PC-9 (cell line): ENCODE measurements at regions of chr15 and their contacts with region 1.

Region 1: DNA sequence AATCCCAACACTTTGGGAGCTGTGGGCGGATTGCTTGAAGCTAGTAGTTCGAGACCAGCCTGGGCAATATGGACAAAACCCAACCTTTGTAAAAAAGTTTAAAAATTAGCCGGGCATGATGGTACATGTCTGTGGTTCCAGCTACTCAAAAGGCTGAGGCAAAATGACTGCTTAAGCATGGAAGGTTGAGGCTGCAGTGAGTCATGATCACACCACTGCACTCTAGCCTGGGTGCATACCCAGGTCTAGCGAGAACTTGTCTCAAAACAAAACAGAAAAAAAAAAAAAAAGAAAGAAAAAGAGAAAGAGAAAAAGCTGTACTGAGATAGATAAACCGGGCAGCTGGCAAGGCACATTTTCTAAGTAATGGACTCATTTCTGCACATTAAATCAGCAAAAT is 10.6 kb downstream of the ARPP19 start:
- DNase-seq: no peak
- H3K4me3 ChIP-seq: no peak overlapping the region
- H3K27ac ChIP-seq: no peak overlapping the region
- H3K4me1 ChIP-seq: no peaks in the 10 kb centered on the region
- H3K27me3 ChIP-seq: no peaks in the 10 kb centered on the region
- CTCF ChIP-seq: no peak

Region 2: DNA sequence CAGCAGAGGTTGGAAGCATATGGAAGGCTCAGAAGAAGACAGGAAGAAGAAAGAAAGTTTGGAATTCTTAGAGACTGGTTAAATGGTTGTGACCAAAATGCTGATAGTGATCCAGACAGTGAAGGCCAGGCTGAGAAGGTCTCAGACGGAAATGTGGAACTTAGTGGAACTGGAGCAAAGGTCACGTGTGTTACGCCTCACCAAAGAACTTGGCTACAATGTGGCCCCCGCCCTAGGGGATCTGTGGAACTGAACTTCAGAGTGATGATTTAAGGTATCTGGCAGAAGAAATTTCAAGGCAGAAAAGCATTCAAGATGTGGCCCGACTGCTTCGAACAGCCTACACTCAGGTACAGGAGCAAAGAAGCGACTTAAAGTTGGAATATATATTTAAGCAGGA is 112.6 kb before region 1 on chr15:
- CTCF ChIA-PET with region 1: no interaction called
- POLR2A ChIA-PET with region 1: interaction called, 17 read pairs
- intact Hi-C with region 1: no loop called
- DNase-seq: no peak
- H3K4me3 ChIP-seq: no peak overlapping the region
- H3K27ac ChIP-seq: no peak overlapping the region
- H3K4me1 ChIP-seq: no peaks in the 10 kb centered on the region
- H3K27me3 ChIP-seq: no peaks in the 10 kb centered on the region
- CTCF ChIP-seq: no peak

Region 3: DNA sequence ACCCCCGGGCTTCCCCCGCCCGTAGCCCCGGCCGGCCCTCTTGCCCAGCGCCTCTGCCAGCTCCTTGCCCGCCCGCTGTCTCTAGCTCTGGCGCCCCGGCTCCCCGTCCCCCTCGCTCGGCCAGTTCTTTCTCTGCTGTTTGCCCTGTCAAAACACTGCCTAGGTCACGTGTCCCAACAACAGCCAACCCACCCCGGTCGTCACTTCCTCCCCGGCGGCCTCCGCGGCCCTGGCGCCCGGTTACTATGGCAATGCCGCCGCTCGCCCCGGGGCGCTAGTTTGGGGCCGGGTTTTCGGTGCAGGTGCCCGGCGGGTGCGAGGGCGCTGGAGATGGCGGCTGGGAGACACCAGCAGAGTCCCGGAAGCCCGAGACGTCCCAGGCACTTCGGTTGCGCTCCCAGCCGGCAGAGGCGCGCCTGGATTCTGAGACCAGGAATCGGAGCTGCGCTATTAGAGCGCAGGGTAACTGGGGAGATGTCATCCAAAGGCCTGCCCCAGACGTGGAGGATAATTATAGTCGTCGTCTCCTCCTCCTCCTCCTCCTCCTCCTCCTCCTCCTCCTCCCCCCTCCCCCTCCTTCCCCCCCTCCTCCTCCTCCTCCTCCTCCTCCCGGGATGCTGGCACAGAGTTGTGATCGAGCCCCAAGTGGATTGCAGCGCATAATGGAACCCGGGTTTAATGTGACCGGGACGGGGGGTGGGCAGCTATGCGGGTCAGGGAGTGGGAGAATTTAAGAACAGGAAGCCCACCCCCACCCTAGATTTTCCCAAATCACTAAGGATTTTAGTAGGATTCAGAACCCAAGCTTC is 121.2 kb after region 1 on chr15 and contains the start of gene ATOSA:
- CTCF ChIA-PET with region 1: no interaction called
- POLR2A ChIA-PET with region 1: no interaction called
- intact Hi-C with region 1: no loop called
- DNase-seq: peak; percentile 76 to 91
- H3K4me3 ChIP-seq: peak within 1 kb of the TSS; percentile 89
- H3K27ac ChIP-seq: peak within 1 kb of the TSS; percentile 60
- H3K4me1 ChIP-seq: peaks cover 54% of the 10 kb centered on the region
- H3K27me3 ChIP-seq: no peaks in the 10 kb centered on the region
- CTCF ChIP-seq: no peak
- total RNA-seq, gene ATOSA: 30.4 and 35.7 TPM in 2 replicates

Region 4: DNA sequence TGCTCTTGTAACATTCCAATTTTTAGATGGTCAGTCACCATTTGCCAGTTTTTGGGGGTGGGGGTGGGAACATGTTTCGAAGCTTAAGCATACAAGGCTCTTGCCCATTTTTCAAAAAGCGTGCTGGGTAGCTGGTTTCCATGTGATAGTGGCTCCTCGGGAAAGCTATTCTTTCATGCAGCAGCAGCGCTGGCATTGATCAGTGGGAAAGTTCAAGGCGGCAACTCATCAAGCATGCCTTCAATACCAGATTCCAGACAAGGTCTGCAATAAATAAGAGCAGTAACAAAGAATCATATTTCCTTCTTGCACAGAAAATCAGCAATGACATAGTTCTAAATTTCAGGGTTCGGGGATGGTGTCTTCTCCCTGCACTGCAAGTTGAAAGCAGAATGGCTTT is 365.4 kb after region 1 on chr15:
- CTCF ChIA-PET with region 1: no interaction called
- POLR2A ChIA-PET with region 1: no interaction called
- intact Hi-C with region 1: no loop called
- DNase-seq: no peak
- H3K4me3 ChIP-seq: no peak overlapping the region
- H3K27ac ChIP-seq: no peak overlapping the region
- H3K4me1 ChIP-seq: no peaks in the 10 kb centered on the region
- H3K27me3 ChIP-seq: peaks cover 16% of the 10 kb centered on the region; the same call in 1 of the 2 replicates
- CTCF ChIP-seq: no peak

Region 5: DNA sequence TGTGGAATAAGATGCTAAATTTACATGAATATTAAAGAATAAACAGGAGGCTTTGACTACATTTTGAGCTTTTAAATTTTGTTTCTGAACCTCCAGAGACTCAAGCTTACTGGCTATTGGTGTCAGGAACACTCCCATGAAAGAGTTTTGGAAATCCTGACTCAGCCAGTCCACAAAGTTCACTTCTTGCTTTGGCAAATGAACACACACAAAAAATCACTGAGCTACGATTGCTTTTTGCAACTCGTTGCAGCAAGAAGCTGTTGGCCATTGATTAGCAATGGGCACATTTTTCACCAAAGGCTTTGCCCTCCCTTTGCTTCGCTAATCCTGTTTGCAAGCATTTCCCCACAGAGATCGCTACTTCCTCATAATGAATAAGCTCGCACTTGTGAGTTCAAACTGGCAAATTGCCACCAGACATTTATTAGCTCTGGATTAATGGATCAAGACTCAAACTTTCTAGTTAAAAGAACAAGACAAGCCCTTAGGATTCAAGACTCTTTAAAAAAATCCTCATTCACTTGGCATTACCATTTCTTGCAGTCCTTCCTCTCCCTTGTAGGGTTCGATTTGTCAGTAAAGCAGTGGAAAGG is 575.2 kb after region 1 on chr15:
- CTCF ChIA-PET with region 1: interaction called, 11 read pairs
- POLR2A ChIA-PET with region 1: no interaction called
- intact Hi-C with region 1: no loop called
- DNase-seq: no peak
- H3K4me3 ChIP-seq: no peak overlapping the region
- H3K27ac ChIP-seq: no peak overlapping the region
- H3K4me1 ChIP-seq: no peaks in the 10 kb centered on the region
- H3K27me3 ChIP-seq: peaks cover 6% of the 10 kb centered on the region; the same call in 1 of the 2 replicates
- CTCF ChIP-seq: no peak